ENCODE measurements at regions of chr16 and their contacts with region 1.

Region 1: DNA sequence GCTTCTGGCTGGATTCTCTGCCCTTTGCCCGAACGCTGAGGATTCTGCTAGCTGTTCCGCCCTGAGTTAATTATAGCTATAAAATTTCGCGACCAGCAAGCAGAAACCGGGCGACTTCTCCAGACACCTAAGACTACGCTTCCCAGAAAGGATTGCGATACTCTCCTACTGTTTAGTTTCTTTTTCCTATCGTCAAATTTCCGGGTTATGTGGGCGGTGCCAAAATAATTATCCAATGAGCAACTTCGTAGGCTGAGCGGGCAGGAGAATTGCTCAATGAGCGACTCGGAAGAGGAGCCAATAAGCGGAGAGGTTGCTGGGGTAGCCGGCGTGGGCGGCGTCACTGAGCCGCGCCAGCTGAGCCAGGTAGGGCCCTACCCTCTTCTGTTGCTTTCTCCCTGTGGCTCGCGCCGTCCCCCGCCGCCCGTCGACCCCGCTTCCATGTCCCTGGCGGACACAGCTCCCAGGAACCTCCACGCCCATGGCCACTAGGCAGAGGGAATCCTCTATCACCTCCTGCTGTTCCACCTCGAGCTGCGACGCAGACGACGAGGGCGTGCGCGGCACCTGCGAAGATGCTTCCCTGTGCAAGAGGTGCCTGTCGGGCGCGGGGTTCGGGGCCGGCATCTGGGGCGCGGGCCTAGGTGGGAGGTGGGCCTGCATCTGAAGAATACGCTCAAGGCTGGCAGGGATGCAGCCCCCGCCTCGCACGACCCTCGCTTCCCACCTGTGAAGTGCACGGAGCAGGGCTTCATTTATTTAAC is at the start of gene LCMT1:
- DNase-seq: peak; percentile 96
- ATAC-seq: peak; percentile 96
- H3K4me3 Mint-ChIP-seq: peak within 1 kb of the TSS; percentile 86
- H3K27ac Mint-ChIP-seq: peak within 1 kb of the TSS; percentile 98
- H3K4me1 Mint-ChIP-seq: peaks cover 40% of the 10 kb centered on the region
- H3K27me3 Mint-ChIP-seq: no peaks in the 10 kb centered on the region
- total RNA-seq, gene LCMT1: 37.9 to 41.3 TPM

Region 2: DNA sequence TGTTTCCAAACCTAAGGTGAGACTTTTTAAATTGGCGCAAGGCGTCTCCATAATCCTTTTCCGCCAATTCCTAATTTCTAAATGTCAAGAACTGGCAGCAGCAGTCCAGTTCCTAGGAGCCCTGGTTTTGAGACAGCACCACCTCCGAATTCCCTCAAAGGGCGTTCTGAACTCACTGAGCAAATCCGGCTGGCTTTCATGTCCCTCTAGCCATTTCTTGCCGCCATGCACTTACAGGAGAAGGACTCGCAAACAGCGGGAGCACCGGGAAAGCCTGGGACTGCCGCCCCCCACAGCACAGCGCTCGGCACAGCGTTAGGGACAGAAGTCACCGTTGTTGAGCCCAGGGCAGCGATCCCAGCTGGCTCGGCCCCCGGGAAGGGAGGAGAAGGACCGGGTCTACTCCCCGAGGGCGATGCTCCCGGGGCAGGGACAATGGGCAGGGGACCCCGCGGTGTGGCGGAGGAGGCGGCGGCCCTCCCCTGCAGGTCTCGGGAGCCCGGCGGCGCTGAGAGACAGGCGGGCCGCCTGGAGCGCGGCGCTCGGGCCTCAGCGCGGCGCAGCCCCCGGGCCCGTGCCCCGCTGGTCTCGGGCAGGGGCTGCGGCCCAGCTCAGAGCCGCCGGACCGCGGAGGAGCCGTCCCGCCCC is 97.0 kb before region 1 on chr16:
- CTCF ChIA-PET with region 1: interaction called, 13 read pairs
- POLR2A ChIA-PET with region 1: interaction called, 12 read pairs
- DNase-seq: peak; percentile 35
- ATAC-seq: peak; percentile 48
- H3K4me3 Mint-ChIP-seq: peak overlapping the region; percentile 92
- H3K27ac Mint-ChIP-seq: peak overlapping the region; percentile 92
- H3K4me1 Mint-ChIP-seq: peaks cover 78% of the 10 kb centered on the region
- H3K27me3 Mint-ChIP-seq: no peaks in the 10 kb centered on the region

Region 3: DNA sequence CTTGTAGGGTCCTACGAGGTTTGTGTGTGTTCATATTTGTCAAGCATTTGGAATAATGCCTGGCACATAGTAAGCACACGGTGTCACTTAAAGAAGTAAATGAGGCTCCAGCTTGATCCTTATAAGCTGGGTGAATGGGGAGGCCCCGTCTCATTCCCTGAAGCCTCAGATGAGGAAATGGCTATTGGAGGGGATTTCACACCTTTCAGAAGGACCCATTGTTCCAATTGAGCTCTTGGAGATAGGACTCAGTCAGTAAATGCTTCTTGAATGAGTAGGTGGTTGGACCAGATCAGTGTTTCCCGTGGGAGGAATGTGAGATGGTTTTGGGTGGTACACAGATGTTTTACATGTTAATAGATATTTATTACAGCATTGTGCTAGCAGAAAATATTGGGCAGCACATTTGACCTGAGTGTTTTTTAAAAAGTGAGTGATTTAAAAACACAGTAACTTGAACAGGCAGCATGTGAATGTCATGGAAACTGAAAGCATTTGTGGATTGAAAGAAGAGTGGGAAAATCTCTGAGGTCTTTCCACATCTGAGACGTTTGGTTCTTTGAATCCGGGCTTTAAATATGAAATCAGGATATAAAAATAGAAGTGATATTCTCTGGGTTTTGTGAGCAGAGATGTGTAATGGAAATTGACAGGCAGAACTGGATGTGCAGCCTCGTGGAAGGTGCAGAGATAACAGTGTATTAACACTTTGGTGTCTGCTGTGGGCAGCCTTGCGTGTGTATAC is 60.0 kb before region 1 on chr16:
- CTCF ChIA-PET with region 1: interaction called, 127 read pairs
- POLR2A ChIA-PET with region 1: interaction called, 37 read pairs
- DNase-seq: no peak
- ATAC-seq: peak; percentile 16
- H3K4me3 Mint-ChIP-seq: peak overlapping the region; percentile 44
- H3K27ac Mint-ChIP-seq: peak overlapping the region; percentile 72
- H3K4me1 Mint-ChIP-seq: peaks cover 53% of the 10 kb centered on the region
- H3K27me3 Mint-ChIP-seq: no peaks in the 10 kb centered on the region

Region 4: GRCh38 chr16:25060920-25061319 is 50.7 kb before region 1 on chr16:
- CTCF ChIA-PET with region 1: interaction called, 127 read pairs
- POLR2A ChIA-PET with region 1: interaction called, 80 read pairs
- DNase-seq: peak; percentile 71
- ATAC-seq: peak; percentile 96
- H3K4me3 Mint-ChIP-seq: peak overlapping the region; percentile 64
- H3K27ac Mint-ChIP-seq: peak overlapping the region; percentile 90
- H3K4me1 Mint-ChIP-seq: peaks cover 62% of the 10 kb centered on the region
- H3K27me3 Mint-ChIP-seq: no peaks in the 10 kb centered on the region

Region 5: DNA sequence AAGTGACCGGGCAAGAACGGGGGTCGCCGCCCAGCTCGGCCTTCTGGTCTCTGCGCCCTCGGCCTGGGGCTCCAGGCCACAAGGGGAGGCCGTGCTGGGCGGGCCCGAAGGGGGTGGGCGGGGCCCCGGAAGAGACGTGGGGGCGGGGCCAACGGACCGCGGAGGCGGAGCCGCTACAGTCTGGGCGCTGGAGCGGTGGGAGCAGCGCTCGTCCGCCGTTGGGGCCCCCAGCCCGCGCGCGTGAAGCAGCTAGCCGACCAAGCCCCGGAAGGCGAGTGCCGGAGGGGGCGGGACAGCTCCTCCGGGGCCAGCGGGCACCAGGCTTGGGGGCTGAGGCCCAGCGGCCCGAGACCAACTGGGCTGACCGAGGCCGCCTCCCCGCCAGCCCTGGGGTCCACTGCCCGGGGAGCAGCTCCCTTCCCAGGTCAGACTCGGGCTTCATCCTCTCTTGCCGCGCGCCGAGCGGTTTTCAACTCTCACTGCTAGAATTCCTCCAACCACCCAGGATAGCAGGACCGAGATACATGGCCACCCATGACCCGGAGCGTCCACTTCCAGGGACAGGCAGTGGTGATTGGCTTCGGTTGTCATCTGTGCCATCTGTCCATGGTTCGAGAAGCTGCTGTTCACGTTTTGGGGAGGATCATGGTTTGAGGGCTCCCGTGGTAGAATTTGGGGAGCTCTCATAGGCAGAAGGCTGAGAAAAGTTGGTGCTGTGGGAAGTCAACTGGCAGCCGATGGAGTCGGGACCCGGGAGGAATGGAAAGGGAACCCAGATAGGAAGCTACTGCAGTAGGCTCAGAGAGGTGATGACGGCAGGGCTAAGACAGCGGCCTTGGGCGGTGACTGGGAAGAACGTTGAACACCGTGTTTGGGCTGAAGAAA is 44.6 kb before region 1 on chr16:
- CTCF ChIA-PET with region 1: interaction called, 127 read pairs
- POLR2A ChIA-PET with region 1: interaction called, 80 read pairs
- DNase-seq: peak; percentile 90
- ATAC-seq: peak; percentile 96
- H3K4me3 Mint-ChIP-seq: peak overlapping the region; percentile 84
- H3K27ac Mint-ChIP-seq: peak overlapping the region; percentile 87
- H3K4me1 Mint-ChIP-seq: peaks cover 49% of the 10 kb centered on the region
- H3K27me3 Mint-ChIP-seq: no peaks in the 10 kb centered on the region

Region 6: GRCh38 chr16:25093208-25094061 is 18.1 kb before region 1 on chr16:
- CTCF ChIA-PET with region 1: interaction called, 12 read pairs
- POLR2A ChIA-PET with region 1: interaction called, 4 read pairs
- DNase-seq: peak; percentile 25
- ATAC-seq: peak; percentile 70
- H3K4me3 Mint-ChIP-seq: peak overlapping the region; percentile 6
- H3K27ac Mint-ChIP-seq: peak overlapping the region; percentile 83
- H3K4me1 Mint-ChIP-seq: peaks cover 22% of the 10 kb centered on the region
- H3K27me3 Mint-ChIP-seq: no peaks in the 10 kb centered on the region

Region 7: GRCh38 chr16:25224731-25225319 is 113.2 kb after region 1 on chr16:
- CTCF ChIA-PET with region 1: interaction called, 23 read pairs
- POLR2A ChIA-PET with region 1: no interaction called
- DNase-seq: no peak
- ATAC-seq: no peak
- H3K4me3 Mint-ChIP-seq: no peak overlapping the region
- H3K27ac Mint-ChIP-seq: no peak overlapping the region
- H3K4me1 Mint-ChIP-seq: peaks cover 2% of the 10 kb centered on the region
- H3K27me3 Mint-ChIP-seq: no peaks in the 10 kb centered on the region

Measured in activated CD8-positive, alpha-beta T cell treated with anti-CD3 and anti-CD28 coated beads, Interleukin-2, amount 10 ng/mL, durations not matched to agents 7 days and 5 days (primary cell).